ENCODE measurements at regions of chr18 and their contacts with region 1.

Region 1: DNA sequence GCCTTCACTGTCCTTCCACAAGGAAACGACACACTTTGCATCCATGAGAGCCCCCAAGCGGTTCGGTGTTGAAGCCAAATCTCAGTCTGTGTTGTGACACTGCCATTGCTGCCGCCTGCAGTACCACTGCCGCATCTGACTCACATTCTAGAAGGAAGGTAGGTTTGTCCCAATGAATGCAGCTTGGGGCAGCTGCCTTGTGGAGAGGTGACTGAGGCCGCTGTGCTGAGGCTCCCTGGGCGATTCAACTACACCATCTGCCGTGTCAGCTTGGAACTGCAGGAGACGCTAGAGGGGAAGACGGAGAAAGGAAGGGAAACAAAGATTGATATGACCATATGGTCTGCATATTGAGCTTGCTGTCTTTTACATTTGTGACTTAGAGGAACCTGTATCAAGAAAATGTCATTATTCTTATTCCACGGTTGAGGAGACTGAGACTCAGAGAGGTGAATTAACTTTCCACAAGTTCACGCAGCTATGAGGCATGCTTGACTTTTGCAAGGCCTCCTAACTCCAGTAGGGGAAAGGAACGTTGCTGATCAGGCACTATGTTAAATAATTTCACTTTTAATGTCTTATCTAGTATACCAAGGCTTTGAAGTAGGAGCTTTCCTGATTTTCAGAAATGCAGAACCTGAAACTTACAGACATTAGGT is 43.5 kb upstream of the LMAN1 start:
- DNase-seq: peak; percentile 93
- ATAC-seq: peak; percentile 100
- H3K4me3 ChIP-seq: no peak overlapping the region
- H3K27ac ChIP-seq: no peak overlapping the region
- H3K4me1 ChIP-seq: peaks cover 6% of the 10 kb centered on the region
- H3K27me3 ChIP-seq: no peaks in the 10 kb centered on the region
- CTCF ChIP-seq: peak; percentile 98

Region 2: DNA sequence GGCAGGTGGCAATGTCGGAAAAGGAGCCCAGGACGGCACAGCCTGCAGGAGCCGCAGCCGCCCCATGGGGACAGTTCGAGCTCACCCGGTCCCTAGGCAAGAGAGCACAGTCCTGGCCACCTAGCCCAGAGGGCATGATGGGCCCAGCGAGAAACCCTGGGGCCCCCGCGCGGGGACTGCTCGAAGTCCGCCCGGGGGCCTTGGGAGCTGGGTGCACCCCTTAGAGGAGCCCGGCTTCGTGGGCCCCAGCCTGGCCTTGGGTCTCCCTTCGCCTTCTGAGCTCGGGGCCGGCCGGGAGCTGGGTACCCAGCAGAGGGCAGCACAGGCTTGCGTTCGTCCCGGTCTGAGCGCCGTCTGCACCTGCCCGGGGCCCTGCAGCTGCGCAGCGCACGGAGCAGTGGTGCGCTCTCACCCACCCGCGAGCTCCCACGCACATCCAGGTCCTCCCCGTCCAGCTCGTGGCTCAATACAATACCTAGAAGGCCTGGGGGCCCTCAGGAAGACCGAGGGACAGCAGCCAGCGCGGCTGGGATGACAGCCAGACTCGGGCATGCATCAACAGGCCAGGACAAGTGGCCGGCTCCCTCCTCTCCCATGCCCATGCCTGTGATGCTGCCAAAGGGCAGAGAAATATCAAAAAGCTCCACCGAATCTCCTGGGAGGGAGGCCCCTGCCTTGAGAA is 634.1 kb before region 1 on chr18:
- CTCF ChIA-PET with region 1: interaction called, 13 read pairs
- POLR2A ChIA-PET with region 1: no interaction called
- intact Hi-C with region 1: loop called (anchors 2 kb)
- DNase-seq: peak; percentile 74
- ATAC-seq: peak; percentile 98
- H3K4me3 ChIP-seq: peak overlapping the region; percentile 67
- H3K27ac ChIP-seq: no peak overlapping the region
- H3K4me1 ChIP-seq: 0 out of 2 replicates have a peak, but pooled peaks cover 3% of the 10 kb centered on the region
- H3K27me3 ChIP-seq: no peaks in the 10 kb centered on the region
- CTCF ChIP-seq: peak; percentile 87

Region 3: DNA sequence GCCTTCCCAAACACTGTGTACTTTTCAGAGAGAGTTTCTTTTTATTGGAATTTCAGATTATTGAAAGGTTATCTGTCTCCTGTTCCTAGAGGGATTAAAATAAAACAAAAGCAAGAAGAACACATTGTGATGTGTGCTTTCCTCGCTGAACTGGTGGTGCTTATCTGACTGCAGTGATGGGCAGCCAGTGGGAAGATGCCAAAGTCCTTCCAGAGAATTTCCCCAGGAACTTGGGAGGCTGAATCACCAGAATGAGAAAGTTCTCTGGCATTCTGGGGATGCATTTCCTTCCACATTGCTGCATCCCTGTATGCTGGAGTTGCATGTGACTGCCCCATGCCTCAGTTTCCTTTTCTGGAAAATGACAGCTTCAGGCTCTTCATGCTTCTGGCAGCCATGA is 316.8 kb before region 1 on chr18:
- CTCF ChIA-PET with region 1: no interaction called
- POLR2A ChIA-PET with region 1: no interaction called
- intact Hi-C with region 1: loop called (anchors 10 kb)
- DNase-seq: no peak
- ATAC-seq: no peak
- H3K4me3 ChIP-seq: no peak overlapping the region
- H3K27ac ChIP-seq: no peak overlapping the region
- H3K4me1 ChIP-seq: no peaks in the 10 kb centered on the region
- H3K27me3 ChIP-seq: peaks cover 8% of the 10 kb centered on the region; the same call in 1 of the 2 replicates
- CTCF ChIP-seq: no peak

Region 4: DNA sequence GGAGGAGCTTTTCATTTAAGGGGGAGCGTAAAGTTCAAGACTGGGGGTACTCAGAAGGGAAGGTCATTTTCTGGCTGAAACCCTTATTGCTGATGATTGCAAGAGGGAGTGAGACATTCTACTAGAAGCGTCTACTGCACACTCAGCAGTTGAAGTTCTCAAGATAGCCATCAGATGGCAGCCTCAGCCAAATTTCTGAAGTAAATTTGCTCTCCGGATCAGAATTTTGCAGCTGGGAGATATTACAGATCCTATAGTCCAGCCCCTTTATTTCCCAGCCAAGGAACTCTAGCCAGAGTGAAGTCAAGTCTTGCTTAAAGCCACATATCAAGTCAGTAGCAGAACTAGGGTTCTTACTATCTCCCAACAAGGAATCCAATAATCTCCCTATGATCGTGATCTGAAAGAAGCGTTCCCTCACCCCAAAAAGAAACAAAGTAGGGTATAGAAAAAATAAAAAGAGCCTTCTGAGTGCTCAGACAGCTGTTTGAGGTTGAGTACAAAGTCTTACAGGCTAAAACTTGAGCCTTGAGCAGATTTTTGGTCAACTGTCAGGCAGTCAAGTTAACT is 153.3 kb before region 1 on chr18:
- CTCF ChIA-PET with region 1: interaction called, 28 read pairs
- POLR2A ChIA-PET with region 1: no interaction called
- intact Hi-C with region 1: loop called (anchors 2 kb)
- DNase-seq: peak; percentile 90
- ATAC-seq: peak; percentile 98
- H3K4me3 ChIP-seq: no peak overlapping the region
- H3K27ac ChIP-seq: no peak overlapping the region
- H3K4me1 ChIP-seq: no peaks in the 10 kb centered on the region
- H3K27me3 ChIP-seq: peaks cover 48% of the 10 kb centered on the region
- CTCF ChIP-seq: peak; percentile 87

Region 5: DNA sequence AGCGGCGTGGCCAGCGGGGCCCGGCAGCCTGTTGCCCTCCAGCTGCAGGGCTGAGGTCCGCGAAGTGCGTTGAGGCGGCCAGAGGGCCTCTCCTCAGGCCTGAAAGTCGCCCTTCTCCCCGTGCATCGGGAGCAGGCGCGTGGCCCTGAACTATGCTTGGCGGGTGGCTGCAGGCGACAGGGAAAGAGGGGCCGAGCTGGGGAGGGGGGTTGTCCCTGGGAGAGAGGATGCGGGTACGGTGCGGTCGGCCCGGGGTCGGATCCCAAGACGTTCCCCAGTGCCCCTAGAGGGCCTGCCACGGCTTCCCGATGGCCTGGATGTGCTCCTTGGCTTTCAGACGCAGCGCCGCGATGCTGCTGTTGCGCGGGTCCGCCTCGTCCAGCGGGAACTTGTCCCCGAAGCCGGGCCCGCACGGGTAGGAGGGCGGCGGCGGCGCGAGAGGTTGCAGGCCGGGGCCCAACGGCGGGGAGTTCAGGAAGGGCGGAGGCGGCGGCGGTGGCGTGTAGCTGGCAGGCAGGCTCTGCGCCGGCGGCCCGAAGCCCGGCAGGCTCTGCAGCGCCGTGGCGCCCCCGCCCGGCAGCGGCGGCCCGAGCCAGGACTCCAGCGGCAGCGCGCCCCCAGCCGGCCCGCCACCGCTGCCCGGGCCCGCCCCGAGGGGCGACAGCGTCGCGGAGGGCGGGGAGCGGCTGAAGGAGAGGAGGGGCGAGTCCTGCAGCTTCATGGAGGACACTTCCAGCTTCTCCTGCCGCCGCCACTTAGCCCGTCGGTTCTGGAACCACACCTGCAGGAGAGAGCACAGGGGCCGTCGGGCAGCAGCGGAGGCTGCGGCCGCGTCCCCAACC is 133.6 kb before region 1 on chr18:
- CTCF ChIA-PET with region 1: no interaction called
- POLR2A ChIA-PET with region 1: no interaction called
- intact Hi-C with region 1: loop called (anchors 5 kb)
- DNase-seq: peak; percentile 51
- ATAC-seq: peak; percentile 70
- H3K4me3 ChIP-seq: peak overlapping the region; percentile 59
- H3K27ac ChIP-seq: no peak overlapping the region
- H3K4me1 ChIP-seq: no peaks in the 10 kb centered on the region
- H3K27me3 ChIP-seq: peaks cover 67% of the 10 kb centered on the region
- CTCF ChIP-seq: 0 out of 2 replicates have a peak, but pooled peaks have one; percentile 22

Region 6: GRCh38 chr18:59308248-59308937 is 94.2 kb before region 1 on chr18:
- CTCF ChIA-PET with region 1: interaction called, 136 read pairs
- POLR2A ChIA-PET with region 1: no interaction called
- intact Hi-C with region 1: loop called (anchors 2 kb)
- DNase-seq: peak; percentile 81
- ATAC-seq: peak; percentile 97
- H3K4me3 ChIP-seq: peak overlapping the region; percentile 65
- H3K27ac ChIP-seq: no peak overlapping the region
- H3K4me1 ChIP-seq: no peaks in the 10 kb centered on the region
- H3K27me3 ChIP-seq: no peaks in the 10 kb centered on the region
- CTCF ChIP-seq: peak; percentile 87

Region 7: GRCh38 chr18:59358712-59359575 is 43.6 kb before region 1 on chr18 and contains the start of gene LMAN1:
- CTCF ChIA-PET with region 1: interaction called, 9 read pairs
- POLR2A ChIA-PET with region 1: interaction called, 3 read pairs
- intact Hi-C with region 1: loop called (anchors 2 kb)
- DNase-seq: peak; percentile 94
- ATAC-seq: peak; percentile 88
- H3K4me3 ChIP-seq: peak within 1 kb of the TSS; percentile 95
- H3K27ac ChIP-seq: peak within 1 kb of the TSS; percentile 84
- H3K4me1 ChIP-seq: peaks cover 20% of the 10 kb centered on the region
- H3K27me3 ChIP-seq: no peaks in the 10 kb centered on the region
- CTCF ChIP-seq: no peak
- total RNA-seq, gene LMAN1: 109 and 126 TPM in 2 replicates

Measured in PC-3 (cell line).